Activated CD4-positive, alpha-beta T cell treated with anti-CD3 and anti-CD28 coated beads for 36 hours (primary cell): ENCODE measurements at regions of chr10 and their contacts with region 1.

Region 1: GRCh38 chr10:84139126-84140035 is at the start of gene GHITM:
- DNase-seq: peak; percentile 100
- ATAC-seq: peak; percentile 94
- H3K4me3 Mint-ChIP-seq: peak within 1 kb of the TSS; percentile 96
- H3K27ac Mint-ChIP-seq: peak within 1 kb of the TSS; percentile 100
- H3K4me1 Mint-ChIP-seq: peaks cover 32% of the 10 kb centered on the region
- H3K27me3 Mint-ChIP-seq: no peaks in the 10 kb centered on the region
- total RNA-seq, gene GHITM: 121 to 178 TPM

Region 2: DNA sequence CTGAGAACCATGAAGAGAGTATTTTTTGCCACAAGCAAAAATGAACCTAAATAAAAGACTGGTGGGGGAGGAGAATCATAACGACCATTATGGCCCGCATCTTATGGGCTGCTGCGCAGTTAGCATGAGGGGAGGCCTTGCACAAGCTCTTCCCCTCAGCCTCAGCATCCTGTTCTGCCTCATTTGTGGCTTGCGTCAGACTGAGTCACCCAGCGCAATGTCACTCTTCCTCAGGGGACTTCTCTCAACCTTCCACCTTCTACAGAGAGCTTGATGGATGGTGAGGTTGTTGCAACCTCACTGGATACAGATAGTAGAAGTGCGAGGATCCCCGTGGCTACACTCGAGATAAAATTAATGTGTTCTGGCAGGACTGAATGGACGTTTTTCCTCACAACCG is 17.4 kb after region 1 on chr10:
- CTCF ChIA-PET with region 1: interaction called, 5 read pairs
- POLR2A ChIA-PET with region 1: no interaction called
- intact Hi-C with region 1: loop called in 1 of 2 experiments (anchors 2 kb)
- DNase-seq: peak; percentile 70
- ATAC-seq: peak; percentile 90
- H3K4me3 Mint-ChIP-seq: no peak overlapping the region
- H3K27ac Mint-ChIP-seq: peak overlapping the region; percentile 77
- H3K4me1 Mint-ChIP-seq: peaks cover 37% of the 10 kb centered on the region
- H3K27me3 Mint-ChIP-seq: no peaks in the 10 kb centered on the region

Region 3: GRCh38 chr10:84194424-84195040 is 55.2 kb after region 1 on chr10 and contains the start of gene CDHR1:
- CTCF ChIA-PET with region 1: no interaction called
- POLR2A ChIA-PET with region 1: interaction called, 3 read pairs
- intact Hi-C with region 1: loop called in 1 of 2 experiments (anchors 1 kb)
- DNase-seq: peak; percentile 72
- ATAC-seq: peak; percentile 84
- H3K4me3 Mint-ChIP-seq: peak within 1 kb of the TSS; percentile 49
- H3K27ac Mint-ChIP-seq: no peak within 1 kb of the TSS
- H3K4me1 Mint-ChIP-seq: peaks cover 13% of the 10 kb centered on the region
- H3K27me3 Mint-ChIP-seq: peaks cover 27% of the 10 kb centered on the region
- total RNA-seq, gene CDHR1: 0.62 to 1.1 TPM

Region 4: DNA sequence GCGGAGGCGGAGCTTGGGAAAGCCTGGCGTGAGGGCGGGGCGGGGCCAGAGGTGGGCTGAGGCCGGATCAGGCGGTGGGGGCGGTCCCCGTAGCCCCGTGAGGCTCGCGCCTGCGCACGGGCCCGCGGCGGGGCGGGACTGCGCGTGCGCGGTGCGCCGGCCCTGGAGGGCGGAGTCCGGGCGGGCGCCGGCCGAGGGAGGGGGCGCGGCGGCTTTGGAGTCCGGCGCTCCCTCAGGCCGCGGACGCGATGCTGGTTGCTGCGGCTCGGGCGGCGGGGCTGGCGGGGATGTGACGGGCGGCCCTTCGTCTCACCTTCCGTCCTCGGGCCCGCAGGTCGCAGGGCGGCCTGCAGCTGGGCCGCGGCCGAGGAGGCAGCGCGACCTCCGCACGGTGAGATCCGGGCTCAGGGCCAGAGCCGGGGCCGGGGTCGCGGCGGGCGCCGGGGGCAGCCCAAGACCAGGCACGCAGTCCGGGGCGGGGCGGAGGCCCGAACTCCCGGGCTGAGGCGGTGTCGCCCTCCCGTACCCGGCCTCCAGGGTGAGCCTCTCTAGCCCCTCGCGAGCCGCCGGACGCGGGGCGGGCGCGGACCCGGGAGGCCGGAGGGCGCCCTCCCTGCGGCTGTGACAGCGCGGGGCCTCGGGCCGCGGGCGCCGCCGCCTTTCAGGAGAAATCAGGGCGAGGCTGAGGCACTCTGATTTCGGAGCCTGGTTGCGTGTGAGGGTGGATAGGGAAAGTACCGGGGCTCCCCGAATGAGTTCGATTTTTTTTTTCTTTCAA is 189.2 kb after region 1 on chr10 and contains the start of gene CCSER2:
- CTCF ChIA-PET with region 1: no interaction called
- POLR2A ChIA-PET with region 1: interaction called, 5 read pairs
- intact Hi-C with region 1: loop called (anchors 1 kb)
- DNase-seq: peak; percentile 98
- ATAC-seq: peak; percentile 74
- H3K4me3 Mint-ChIP-seq: peak within 1 kb of the TSS; percentile 93
- H3K27ac Mint-ChIP-seq: peak within 1 kb of the TSS; percentile 98
- H3K4me1 Mint-ChIP-seq: peaks cover 28% of the 10 kb centered on the region
- H3K27me3 Mint-ChIP-seq: no peaks in the 10 kb centered on the region
- total RNA-seq, gene CCSER2: 61.2 to 85.2 TPM

Region 5: GRCh38 chr10:86046845-86047460 is 1907.6 kb after region 1 on chr10:
- CTCF ChIA-PET with region 1: no interaction called
- POLR2A ChIA-PET with region 1: no interaction called
- intact Hi-C with region 1: loop called in 1 of 2 experiments (anchors 5 kb)
- DNase-seq: peak; percentile 47
- ATAC-seq: peak; percentile 73
- H3K4me3 Mint-ChIP-seq: no peak overlapping the region
- H3K27ac Mint-ChIP-seq: no peak overlapping the region
- H3K4me1 Mint-ChIP-seq: peaks cover 19% of the 10 kb centered on the region
- H3K27me3 Mint-ChIP-seq: peaks cover 17% of the 10 kb centered on the region